ENCODE measurements at regions of chr15 and their contacts with region 1.

Region 1: GRCh38 chr15:74768771-74769342 is 13.0 kb upstream of the CSK start:
- DNase-seq: peak in 1 of 2 experiments; percentile 52
- H3K4me3 ChIP-seq: no peak overlapping the region
- H3K27ac ChIP-seq: no peak overlapping the region
- H3K4me1 ChIP-seq: peaks cover 8% of the 10 kb centered on the region
- H3K27me3 ChIP-seq: no peaks in the 10 kb centered on the region
- CTCF ChIP-seq: peak; percentile 90

Region 2: GRCh38 chr15:74373731-74374647 is 394.9 kb before region 1 on chr15:
- CTCF ChIA-PET with region 1: no interaction called
- POLR2A ChIA-PET with region 1: no interaction called
- intact Hi-C with region 1: loop called (anchors 1 kb)
- DNase-seq: peak; percentile 73 to 91
- H3K4me3 ChIP-seq: peak overlapping the region; percentile 67
- H3K27ac ChIP-seq: no peak overlapping the region
- H3K4me1 ChIP-seq: peaks cover 22% of the 10 kb centered on the region
- H3K27me3 ChIP-seq: no peaks in the 10 kb centered on the region
- CTCF ChIP-seq: peak; percentile 81

Region 3: GRCh38 chr15:74781431-74782258 is 12.8 kb after region 1 on chr15 and contains the start of gene CSK:
- CTCF ChIA-PET with region 1: interaction called, 10 read pairs
- POLR2A ChIA-PET with region 1: no interaction called
- intact Hi-C with region 1: no loop called
- DNase-seq: peak in 1 of 2 experiments; percentile 77
- H3K4me3 ChIP-seq: peak within 1 kb of the TSS; percentile 95
- H3K27ac ChIP-seq: no peak within 1 kb of the TSS
- H3K4me1 ChIP-seq: peaks cover 20% of the 10 kb centered on the region
- H3K27me3 ChIP-seq: no peaks in the 10 kb centered on the region
- CTCF ChIP-seq: peak; percentile 65
- total RNA-seq, gene CSK: 78.3 TPM in 2 replicates

Region 4: GRCh38 chr15:74835307-74835823 is 66.5 kb after region 1 on chr15:
- CTCF ChIA-PET with region 1: no interaction called
- POLR2A ChIA-PET with region 1: no interaction called
- intact Hi-C with region 1: loop called (anchors 1 kb)
- DNase-seq: peak; percentile 72 to 75
- H3K4me3 ChIP-seq: no peak overlapping the region
- H3K27ac ChIP-seq: no peak overlapping the region
- H3K4me1 ChIP-seq: peaks cover 6% of the 10 kb centered on the region
- H3K27me3 ChIP-seq: no peaks in the 10 kb centered on the region
- CTCF ChIP-seq: peak; percentile 92

Region 5: GRCh38 chr15:74950078-74951000 is 181.5 kb after region 1 on chr15:
- CTCF ChIA-PET with region 1: interaction called, 11 read pairs
- POLR2A ChIA-PET with region 1: no interaction called
- intact Hi-C with region 1: loop called (anchors 1 kb)
- DNase-seq: peak; percentile 67 to 75
- H3K4me3 ChIP-seq: no peak overlapping the region
- H3K27ac ChIP-seq: no peak overlapping the region
- H3K4me1 ChIP-seq: peaks cover 23% of the 10 kb centered on the region
- H3K27me3 ChIP-seq: no peaks in the 10 kb centered on the region
- CTCF ChIP-seq: peak; percentile 99

Region 6: DNA sequence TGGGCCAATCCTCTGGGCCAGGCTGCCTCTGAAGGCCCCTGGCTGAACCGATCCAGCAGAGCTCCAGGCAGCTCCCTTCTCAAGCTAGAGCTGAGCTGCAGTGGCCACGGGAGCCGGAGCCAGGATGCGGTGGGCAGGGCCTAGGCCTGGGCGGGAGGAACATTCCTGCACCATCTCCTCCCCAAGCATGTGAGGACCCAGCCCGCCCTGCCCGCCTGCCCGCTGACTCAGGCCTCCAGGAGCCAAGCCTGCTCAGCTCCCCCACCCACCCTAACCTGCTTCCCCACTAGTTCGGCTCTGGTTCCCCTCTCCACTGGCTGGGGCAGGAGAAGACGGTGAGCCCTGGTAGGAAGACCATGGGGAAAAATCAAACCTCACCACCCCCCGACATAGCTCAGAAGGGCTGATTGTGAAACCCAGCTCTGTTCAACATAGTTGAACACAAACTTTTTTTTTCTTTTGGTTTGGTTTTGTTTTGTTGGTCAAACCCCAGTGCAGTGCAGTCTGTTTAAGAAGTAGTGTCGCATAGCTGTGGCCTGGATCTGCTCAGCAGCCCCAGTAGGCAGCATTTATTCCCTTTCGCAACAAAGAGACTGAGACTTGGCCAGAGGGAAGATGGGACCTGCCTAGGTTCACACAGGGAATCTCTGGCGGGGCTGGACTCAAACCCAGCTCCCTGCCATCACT is 892.4 kb after region 1 on chr15:
- CTCF ChIA-PET with region 1: no interaction called
- POLR2A ChIA-PET with region 1: interaction called, 11 read pairs
- intact Hi-C with region 1: no loop called
- DNase-seq: peak; percentile 82 to 91
- H3K4me3 ChIP-seq: peak overlapping the region; percentile 23; the same call in 1 of the 2 replicates
- H3K27ac ChIP-seq: peak overlapping the region; percentile 85
- H3K4me1 ChIP-seq: peaks cover 61% of the 10 kb centered on the region
- H3K27me3 ChIP-seq: no peaks in the 10 kb centered on the region
- CTCF ChIP-seq: no peak